ENCODE measurements at regions of chr15 and their contacts with region 1.

Region 1: GRCh38 chr15:64093627-64094417 is at the start of gene CIAO2A:
- DNase-seq: peak; percentile 80 to 97
- ATAC-seq: peak; percentile 72 to 83 (median 75)
- H3K4me3 ChIP-seq: peak within 1 kb of the TSS; percentile 74
- H3K4me3 Mint-ChIP-seq: peak within 1 kb of the TSS; percentile 100
- H3K27ac ChIP-seq: peak within 1 kb of the TSS; percentile 93
- H3K27ac Mint-ChIP-seq: peak within 1 kb of the TSS; percentile 98 to 99
- H3K4me1 ChIP-seq: peaks cover 52% of the 10 kb centered on the region
- H3K4me1 Mint-ChIP-seq: peaks cover 64 to 69% of the 10 kb centered on the region in 2 donors
- H3K27me3 ChIP-seq: no peaks in the 10 kb centered on the region
- H3K27me3 Mint-ChIP-seq: no peaks in the 10 kb centered on the region
- CTCF ChIP-seq: no peak
- total RNA-seq, gene CIAO2A: 20.2 to 23.9 (median 22.9) TPM

Region 2: DNA sequence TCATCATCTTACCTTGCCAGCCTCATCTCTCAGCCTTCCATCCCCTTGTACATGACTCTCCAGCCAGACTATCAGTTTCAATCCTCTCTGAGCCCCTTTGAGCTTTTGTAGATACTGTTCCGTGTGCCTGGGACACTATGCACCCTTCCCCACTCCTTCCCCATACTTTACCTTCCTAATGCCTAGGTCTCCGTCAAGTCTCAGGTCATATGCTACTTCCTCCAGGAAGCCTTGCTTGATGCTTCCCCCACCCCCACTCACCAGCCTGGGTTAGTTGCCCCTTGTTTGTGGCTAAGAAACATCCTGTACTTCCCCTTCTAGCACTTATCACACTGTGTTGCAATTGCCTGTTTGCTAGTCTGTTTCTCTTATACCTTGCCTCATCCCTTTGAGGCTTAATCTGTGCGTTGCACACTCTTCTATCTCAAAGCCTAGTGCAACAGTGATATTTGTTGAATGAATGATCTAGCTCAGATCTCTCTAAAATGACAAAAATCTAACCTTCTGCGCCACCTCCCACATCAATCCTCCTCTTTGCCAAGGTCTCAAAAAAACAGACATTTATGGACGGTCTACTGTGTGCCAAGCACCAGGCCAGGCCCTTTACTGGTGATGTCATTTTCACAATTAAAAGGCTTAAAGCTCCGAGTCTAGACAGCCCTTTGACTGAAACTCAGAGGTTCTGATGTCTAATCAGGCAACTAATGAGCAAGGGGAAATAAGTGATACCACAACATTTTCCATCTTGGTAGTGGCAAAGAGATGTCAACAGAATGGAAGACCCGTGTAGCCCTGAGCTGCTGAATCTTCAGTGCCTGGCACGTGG is 596.0 kb before region 1 on chr15:
- intact Hi-C with region 1: loop called (anchors 5 kb)
- DNase-seq: peak; percentile 73 to 92
- ATAC-seq: peak; percentile 70 to 92 (median 85)
- H3K4me3 ChIP-seq: peak overlapping the region; percentile 10
- H3K4me3 Mint-ChIP-seq: no peak overlapping the region
- H3K27ac ChIP-seq: peak overlapping the region; percentile 99
- H3K27ac Mint-ChIP-seq: no peak overlapping the region
- H3K4me1 ChIP-seq: peaks cover 88% of the 10 kb centered on the region
- H3K4me1 Mint-ChIP-seq: peaks cover 34 to 64% of the 10 kb centered on the region in 2 donors
- H3K27me3 ChIP-seq: no peaks in the 10 kb centered on the region
- H3K27me3 Mint-ChIP-seq: no peaks in the 10 kb centered on the region
- CTCF ChIP-seq: no peak

Region 3: DNA sequence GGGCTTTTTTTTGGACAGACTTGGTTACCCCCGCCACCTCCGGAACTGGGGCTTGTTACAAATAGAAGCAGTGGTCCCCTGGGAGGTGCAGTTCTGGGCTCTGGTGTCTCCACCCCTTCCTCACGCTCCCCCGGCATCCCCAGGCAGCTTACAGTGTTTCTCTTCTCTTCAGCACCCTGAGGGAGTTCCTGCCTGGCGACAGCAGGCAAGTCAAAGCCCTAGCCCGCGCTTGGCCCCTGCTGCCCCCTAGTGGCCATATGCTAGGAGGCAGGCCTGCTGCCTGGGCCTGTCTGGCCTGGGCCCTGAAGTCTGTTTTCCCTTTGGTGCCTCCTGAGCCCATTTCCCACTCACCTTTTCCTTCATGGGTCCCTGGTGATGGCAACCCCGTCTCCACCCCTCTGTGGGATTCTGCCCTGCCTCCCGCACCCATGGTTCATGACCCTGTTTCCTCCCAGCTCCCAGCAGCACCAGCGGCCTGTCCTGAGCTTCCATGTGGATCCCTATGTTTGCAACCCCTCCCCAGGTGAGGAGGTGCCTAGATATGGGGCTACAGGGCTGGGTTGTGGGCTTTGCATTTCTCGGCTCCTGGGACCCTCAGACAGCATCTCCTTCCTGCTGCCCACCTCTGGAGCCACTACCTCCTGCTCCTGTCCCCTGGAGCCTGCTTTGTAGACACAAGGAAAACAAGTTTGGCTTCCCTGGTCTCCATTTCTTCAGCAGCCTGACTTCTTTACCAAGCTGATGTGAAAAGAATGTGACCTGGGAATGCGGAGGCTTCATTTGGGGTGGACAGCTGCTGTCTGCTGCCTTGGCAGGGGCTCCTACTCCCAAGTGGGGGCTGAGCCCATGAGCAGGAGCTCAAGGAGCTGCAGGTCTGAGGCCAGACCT is 59.9 kb after region 1 on chr15:
- intact Hi-C with region 1: loop called (anchors 5 kb)
- DNase-seq: peak; percentile 89 to 92
- ATAC-seq: peak; percentile 90 to 96 (median 96)
- H3K4me3 ChIP-seq: peak overlapping the region; percentile 19
- H3K4me3 Mint-ChIP-seq: peak overlapping the region; percentile 87
- H3K27ac ChIP-seq: peak overlapping the region; percentile 25
- H3K27ac Mint-ChIP-seq: peak overlapping the region in 1 of 2 donors; percentile 72
- H3K4me1 ChIP-seq: peaks cover 38% of the 10 kb centered on the region
- H3K4me1 Mint-ChIP-seq: peaks cover 22 to 43% of the 10 kb centered on the region in 2 donors
- H3K27me3 ChIP-seq: peaks cover 12% of the 10 kb centered on the region
- H3K27me3 Mint-ChIP-seq: peaks cover 6 to 7% of the 10 kb centered on the region in 2 donors
- CTCF ChIP-seq: peak; percentile 89